ENCODE measurements at regions of chr20 and their contacts with region 1.

Region 1: DNA sequence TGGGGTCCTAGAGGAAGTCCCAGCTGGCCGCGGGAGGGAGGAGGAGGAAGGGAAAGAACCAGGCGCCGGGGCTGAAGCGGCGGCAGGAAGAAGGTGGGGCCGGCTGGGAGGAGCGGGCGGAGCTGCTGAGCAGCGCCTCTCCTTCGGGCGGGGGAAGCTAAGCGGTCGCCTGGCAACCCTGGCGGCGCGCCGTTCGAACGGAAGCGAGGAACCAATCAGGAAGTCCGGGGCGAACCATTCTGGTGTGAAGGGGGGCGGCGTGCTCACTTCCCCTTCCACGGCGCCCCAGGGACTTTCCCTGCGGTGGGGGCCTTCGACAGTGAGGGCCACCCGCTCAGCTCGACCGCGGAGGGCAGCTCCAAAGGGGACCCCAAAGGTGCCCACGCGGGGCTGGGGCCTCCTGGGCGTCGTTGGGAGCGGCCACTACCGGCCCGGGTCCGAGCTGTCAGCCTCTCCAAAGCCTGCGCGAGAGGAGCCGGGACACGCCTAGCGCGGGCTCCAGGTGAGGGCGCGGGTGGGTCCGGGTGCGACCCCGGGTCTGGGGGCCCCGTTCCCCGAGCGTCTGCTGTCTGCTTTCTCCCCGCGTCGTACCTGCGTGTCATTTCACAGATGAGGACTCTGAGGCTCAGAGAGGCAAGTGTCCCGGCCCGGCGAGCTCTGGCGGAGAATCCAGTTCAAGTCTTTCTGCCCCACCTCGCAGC is at the start of gene FAM110A:
- DNase-seq: peak; percentile 87 to 95 (median 94)
- ATAC-seq: peak; percentile 94
- H3K4me3 ChIP-seq: peak within 1 kb of the TSS; percentile 88
- H3K4me3 Mint-ChIP-seq: peak within 1 kb of the TSS; percentile 73 to 92 (median 87)
- H3K27ac ChIP-seq: peak within 1 kb of the TSS; percentile 94
- H3K27ac Mint-ChIP-seq: peak within 1 kb of the TSS; percentile 60 to 97 (median 87)
- H3K4me1 ChIP-seq: peaks cover 24 to 27% of the 10 kb centered on the region in 2 donors
- H3K4me1 Mint-ChIP-seq: peaks cover 36 to 50% (median 46%) of the 10 kb centered on the region in 7 donors
- H3K27me3 ChIP-seq: no peaks in the 10 kb centered on the region
- H3K27me3 Mint-ChIP-seq: no peaks in the 10 kb centered on the region
- total RNA-seq, gene FAM110A: 10.9 to 47.4 (median 23.7) TPM

Region 2: GRCh38 chr20:462199-462991 is 371.2 kb before region 1 on chr20 and contains the start of gene TBC1D20:
- CTCF ChIA-PET with region 1: no interaction called
- POLR2A ChIA-PET with region 1: no interaction called
- intact Hi-C with region 1: loop called in 1 of 2 experiments (anchors 2 kb)
- DNase-seq: peak; percentile 81 to 92 (median 89)
- ATAC-seq: peak; percentile 99
- H3K4me3 ChIP-seq: peak within 1 kb of the TSS; percentile 71
- H3K4me3 Mint-ChIP-seq: peak within 1 kb of the TSS; percentile 90 to 100 (median 97)
- H3K27ac ChIP-seq: peak within 1 kb of the TSS; percentile 85
- H3K27ac Mint-ChIP-seq: peak within 1 kb of the TSS; percentile 90 to 98 (median 95)
- H3K4me1 ChIP-seq: peaks cover 26 to 33% of the 10 kb centered on the region in 2 donors
- H3K4me1 Mint-ChIP-seq: peaks cover 31 to 55% (median 49%) of the 10 kb centered on the region in 7 donors
- H3K27me3 ChIP-seq: no peaks in the 10 kb centered on the region
- H3K27me3 Mint-ChIP-seq: peaks cover 0 to 2% (median 0%) of the 10 kb centered on the region in 5 donors
- total RNA-seq, gene TBC1D20: 26.3 to 45.7 (median 35.4) TPM

Region 3: GRCh38 chr20:815914-816606 is 17.5 kb before region 1 on chr20:
- CTCF ChIA-PET with region 1: interaction called, 5 read pairs
- POLR2A ChIA-PET with region 1: no interaction called
- intact Hi-C with region 1: loop called (anchors 1 kb)
- DNase-seq: peak; percentile 47 to 73 (median 64)
- ATAC-seq: peak; percentile 69
- H3K4me3 ChIP-seq: no peak overlapping the region
- H3K4me3 Mint-ChIP-seq: no peak overlapping the region
- H3K27ac ChIP-seq: no peak overlapping the region
- H3K27ac Mint-ChIP-seq: peak overlapping the region in 4 of 9 donors; percentile 1 to 57 (median 31)
- H3K4me1 ChIP-seq: no peaks in the 10 kb centered on the region
- H3K4me1 Mint-ChIP-seq: peaks cover 5 to 13% (median 9%) of the 10 kb centered on the region in 7 donors
- H3K27me3 ChIP-seq: no peaks in the 10 kb centered on the region
- H3K27me3 Mint-ChIP-seq: peaks cover 9 to 27% (median 14%) of the 10 kb centered on the region in 5 donors

Region 4: GRCh38 chr20:856361-857040 is 22.9 kb after region 1 on chr20:
- CTCF ChIA-PET with region 1: no interaction called
- POLR2A ChIA-PET with region 1: interaction called, 11 read pairs
- intact Hi-C with region 1: no loop called
- DNase-seq: peak in 7 of 9 donors; percentile 22 to 52 (median 39)
- ATAC-seq: peak; percentile 82
- H3K4me3 ChIP-seq: peak overlapping the region; percentile 6
- H3K4me3 Mint-ChIP-seq: peak overlapping the region; percentile 45 to 77 (median 66)
- H3K27ac ChIP-seq: peak overlapping the region; percentile 51
- H3K27ac Mint-ChIP-seq: peak overlapping the region; percentile 64 to 91 (median 80)
- H3K4me1 ChIP-seq: peaks cover 14 to 32% of the 10 kb centered on the region in 2 donors
- H3K4me1 Mint-ChIP-seq: peaks cover 38 to 86% (median 70%) of the 10 kb centered on the region in 7 donors
- H3K27me3 ChIP-seq: no peaks in the 10 kb centered on the region
- H3K27me3 Mint-ChIP-seq: no peaks in the 10 kb centered on the region

Region 5: DNA sequence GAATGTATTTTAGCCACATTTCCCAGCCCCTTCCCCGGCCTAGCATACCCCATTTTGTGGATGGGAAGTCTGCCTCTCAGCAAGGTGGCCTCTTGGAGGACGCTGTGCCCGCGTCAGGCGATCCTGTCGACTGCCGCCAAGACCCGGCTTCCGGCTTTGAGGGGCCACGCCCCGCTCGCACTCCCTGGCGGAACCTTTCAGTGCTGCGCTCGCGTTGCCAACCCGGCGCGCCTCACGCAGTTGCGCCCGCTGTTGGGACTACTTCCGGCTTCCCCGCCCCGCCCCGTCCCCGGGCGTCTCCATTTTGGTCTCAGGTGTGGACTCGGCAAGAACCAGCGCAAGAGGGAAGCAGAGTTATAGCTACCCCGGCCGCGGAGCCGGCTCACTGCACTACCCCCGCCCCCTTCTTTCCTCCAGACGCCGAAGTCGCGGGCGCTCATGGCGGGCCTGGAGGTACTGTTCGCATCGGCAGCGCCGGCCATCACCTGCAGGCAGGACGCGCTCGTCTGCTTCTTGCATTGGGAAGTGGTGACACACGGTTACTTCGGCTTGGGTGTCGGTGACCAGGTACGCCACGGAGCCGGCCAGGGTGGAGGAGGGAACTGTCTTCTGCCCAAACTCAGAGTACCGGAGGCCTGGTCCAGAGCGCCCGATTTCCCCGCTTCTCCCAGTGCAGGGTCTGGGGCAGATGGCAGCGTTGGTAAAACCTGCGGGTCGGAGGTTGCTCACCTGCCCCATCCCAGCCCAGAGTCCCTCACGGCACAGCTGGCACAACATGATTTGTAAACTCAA is 284.9 kb after region 1 on chr20 and contains the start of gene PSMF1:
- CTCF ChIA-PET with region 1: no interaction called
- POLR2A ChIA-PET with region 1: interaction called, 4 read pairs
- intact Hi-C with region 1: loop called (anchors 1 kb)
- DNase-seq: peak; percentile 93 to 99 (median 96)
- ATAC-seq: peak; percentile 98
- H3K4me3 ChIP-seq: peak within 1 kb of the TSS; percentile 98
- H3K4me3 Mint-ChIP-seq: peak within 1 kb of the TSS; percentile 92 to 97 (median 94)
- H3K27ac ChIP-seq: peak within 1 kb of the TSS; percentile 85
- H3K27ac Mint-ChIP-seq: peak within 1 kb of the TSS; percentile 81 to 97 (median 94)
- H3K4me1 ChIP-seq: peaks cover 40 to 45% of the 10 kb centered on the region in 2 donors
- H3K4me1 Mint-ChIP-seq: peaks cover 46 to 68% (median 61%) of the 10 kb centered on the region in 7 donors
- H3K27me3 ChIP-seq: no peaks in the 10 kb centered on the region
- H3K27me3 Mint-ChIP-seq: no peaks in the 10 kb centered on the region
- total RNA-seq, gene PSMF1: 88.7 to 157 (median 114) TPM

Region 6: GRCh38 chr20:1325173-1326030 is 491.8 kb after region 1 on chr20:
- CTCF ChIA-PET with region 1: no interaction called
- POLR2A ChIA-PET with region 1: no interaction called
- intact Hi-C with region 1: loop called in 1 of 2 experiments (anchors 1 kb)
- DNase-seq: peak; percentile 96 to 99 (median 98)
- ATAC-seq: peak; percentile 92
- H3K4me3 ChIP-seq: peak overlapping the region; percentile 95
- H3K4me3 Mint-ChIP-seq: no peak overlapping the region
- H3K27ac ChIP-seq: peak overlapping the region; percentile 97
- H3K27ac Mint-ChIP-seq: no peak overlapping the region
- H3K4me1 ChIP-seq: peaks cover 18 to 25% of the 10 kb centered on the region in 2 donors
- H3K4me1 Mint-ChIP-seq: peaks cover 0 to 31% (median 14%) of the 10 kb centered on the region in 7 donors
- H3K27me3 ChIP-seq: no peaks in the 10 kb centered on the region
- H3K27me3 Mint-ChIP-seq: no peaks in the 10 kb centered on the region

Region 7: GRCh38 chr20:2470423-2471193 is 1637.0 kb after region 1 on chr20 and contains the start of gene SNRPB:
- CTCF ChIA-PET with region 1: no interaction called
- POLR2A ChIA-PET with region 1: no interaction called
- intact Hi-C with region 1: loop called in 1 of 2 experiments (anchors 10 kb)
- DNase-seq: peak; percentile 87 to 97 (median 96)
- ATAC-seq: peak; percentile 97
- H3K4me3 ChIP-seq: peak within 1 kb of the TSS; percentile 70
- H3K4me3 Mint-ChIP-seq: peak within 1 kb of the TSS; percentile 88 to 99 (median 98)
- H3K27ac ChIP-seq: peak within 1 kb of the TSS; percentile 93
- H3K27ac Mint-ChIP-seq: peak within 1 kb of the TSS; percentile 91 to 100 (median 98)
- H3K4me1 ChIP-seq: peaks cover 17 to 18% of the 10 kb centered on the region in 2 donors
- H3K4me1 Mint-ChIP-seq: peaks cover 27 to 45% (median 39%) of the 10 kb centered on the region in 7 donors
- H3K27me3 ChIP-seq: no peaks in the 10 kb centered on the region
- H3K27me3 Mint-ChIP-seq: peaks cover 0 to 2% (median 0%) of the 10 kb centered on the region in 5 donors
- total RNA-seq, gene SNRPB: 83.5 to 323 (median 118) TPM

Measured in naive thymus-derived CD4-positive, alpha-beta T cell (primary cell).